GM12878 (cell line): ENCODE measurements at regions of chr6 and their contacts with region 1.

Region 1: GRCh38 chr6:20877008-20877937 is 343.0 kb downstream of the CDKAL1 start:
- DNase-seq: peak; percentile 89
- ATAC-seq: peak; percentile 98
- H3K4me3 ChIP-seq: no peak overlapping the region
- H3K27ac ChIP-seq: peak overlapping the region; percentile 80
- H3K4me1 ChIP-seq: peaks cover 18% of the 10 kb centered on the region; the same call in 1 of the 2 replicates
- H3K27me3 ChIP-seq: no peaks in the 10 kb centered on the region
- CTCF ChIP-seq: no peak
- EP300 ChIP-seq: peak; percentile 76 to 91
- POLR2A ChIP-seq: no peak
- RAD21 ChIP-seq: no peak

Region 2: GRCh38 chr6:20564269-20564668 is 313.0 kb before region 1 on chr6:
- CTCF ChIA-PET with region 1: interaction called, 12 read pairs
- POLR2A ChIA-PET with region 1: no interaction called
- RAD21 ChIA-PET with region 1: interaction called, 16 read pairs
- SMC1A ChIA-PET with region 1: interaction called, 7 read pairs
- in situ Hi-C with region 1: no loop called
- intact Hi-C with region 1: loop called (anchors 5 kb)
- DNase-seq: no peak
- ATAC-seq: peak; percentile 39; the same call in 2 of the 3 replicates
- H3K4me3 ChIP-seq: no peak overlapping the region
- H3K27ac ChIP-seq: peak overlapping the region; percentile 61
- H3K4me1 ChIP-seq: peaks cover 5% of the 10 kb centered on the region
- H3K27me3 ChIP-seq: no peaks in the 10 kb centered on the region
- CTCF ChIP-seq: peak in 2 of 3 experiments; percentile 34 to 44; a peak in 4 of 6 replicates
- EP300 ChIP-seq: no peak
- POLR2A ChIP-seq: no peak
- RAD21 ChIP-seq: peak; percentile 36; the same call in 1 of the 2 replicates

Region 3: DNA sequence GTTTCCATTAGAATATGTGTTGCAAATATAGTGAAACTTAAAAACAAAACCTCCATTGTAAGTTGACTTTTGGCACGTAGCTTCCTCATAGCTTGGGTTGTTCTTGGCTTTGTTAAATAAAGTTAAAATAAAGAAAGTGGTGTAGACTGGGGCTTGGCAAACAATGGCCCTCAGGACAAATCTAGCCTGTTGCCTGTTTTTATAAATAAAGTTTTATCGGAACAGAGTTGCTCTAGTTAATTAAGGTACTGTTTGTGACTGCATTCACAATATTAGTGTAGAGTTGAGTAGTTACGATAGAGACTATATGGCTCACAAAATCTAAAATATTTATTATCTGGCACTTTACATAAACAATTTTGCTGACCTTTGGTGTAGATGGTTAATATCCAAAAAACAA is 174.2 kb before region 1 on chr6:
- CTCF ChIA-PET with region 1: no interaction called
- POLR2A ChIA-PET with region 1: no interaction called
- RAD21 ChIA-PET with region 1: no interaction called
- SMC1A ChIA-PET with region 1: no interaction called
- in situ Hi-C with region 1: no loop called
- intact Hi-C with region 1: no loop called
- DNase-seq: no peak
- ATAC-seq: no peak
- H3K4me3 ChIP-seq: no peak overlapping the region
- H3K27ac ChIP-seq: no peak overlapping the region
- H3K4me1 ChIP-seq: peaks cover 6% of the 10 kb centered on the region
- H3K27me3 ChIP-seq: no peaks in the 10 kb centered on the region
- CTCF ChIP-seq: no peak
- EP300 ChIP-seq: no peak
- POLR2A ChIP-seq: no peak
- RAD21 ChIP-seq: no peak

Region 4: DNA sequence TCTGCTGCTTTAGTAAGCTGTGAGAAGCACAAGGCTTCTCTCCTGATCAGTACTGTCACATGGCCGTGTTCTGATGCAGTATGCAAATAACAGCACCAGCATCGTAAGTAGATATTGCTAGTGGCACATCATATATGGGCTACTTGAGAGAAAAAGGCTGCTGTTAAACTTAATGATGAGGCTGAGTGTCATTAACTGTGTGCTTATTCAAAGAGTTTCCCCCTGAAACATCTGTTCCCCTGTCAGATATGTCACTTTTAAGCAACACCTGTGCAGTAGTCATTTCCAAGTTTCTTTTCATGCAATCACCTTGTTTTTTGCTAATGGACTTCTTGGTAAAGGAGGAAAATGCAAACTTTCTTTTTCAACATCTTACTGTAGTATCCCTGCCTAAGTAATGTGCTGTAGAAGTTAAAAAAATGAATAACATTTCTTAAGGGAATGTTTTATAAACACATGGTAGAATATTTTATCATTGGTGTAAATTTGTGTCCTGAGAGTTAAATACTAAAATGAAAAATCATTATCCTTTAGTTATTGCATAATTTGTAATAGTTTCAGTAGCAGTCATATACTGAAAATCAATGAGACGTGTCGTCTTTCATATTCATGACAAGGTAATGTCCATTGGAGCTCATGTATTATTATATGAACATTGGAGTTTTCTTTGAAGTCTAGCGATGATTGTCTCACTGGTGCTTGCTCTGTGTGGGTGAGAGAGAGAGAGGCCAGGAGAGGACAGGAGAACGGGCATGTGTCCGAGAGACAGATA is 23.3 kb after region 1 on chr6:
- CTCF ChIA-PET with region 1: no interaction called
- POLR2A ChIA-PET with region 1: no interaction called
- RAD21 ChIA-PET with region 1: no interaction called
- SMC1A ChIA-PET with region 1: interaction called, 12 read pairs
- in situ Hi-C with region 1: no loop called
- intact Hi-C with region 1: no loop called
- DNase-seq: no peak
- ATAC-seq: peak; percentile 97
- H3K4me3 ChIP-seq: no peak overlapping the region
- H3K27ac ChIP-seq: peak overlapping the region; percentile 33; the same call in 1 of the 2 replicates
- H3K4me1 ChIP-seq: peaks cover 6% of the 10 kb centered on the region; the same call in 1 of the 2 replicates
- H3K27me3 ChIP-seq: no peaks in the 10 kb centered on the region
- CTCF ChIP-seq: no peak
- EP300 ChIP-seq: peak; percentile 42 to 71; a peak in 3 of 4 replicates
- POLR2A ChIP-seq: no peak
- RAD21 ChIP-seq: no peak

Region 5: DNA sequence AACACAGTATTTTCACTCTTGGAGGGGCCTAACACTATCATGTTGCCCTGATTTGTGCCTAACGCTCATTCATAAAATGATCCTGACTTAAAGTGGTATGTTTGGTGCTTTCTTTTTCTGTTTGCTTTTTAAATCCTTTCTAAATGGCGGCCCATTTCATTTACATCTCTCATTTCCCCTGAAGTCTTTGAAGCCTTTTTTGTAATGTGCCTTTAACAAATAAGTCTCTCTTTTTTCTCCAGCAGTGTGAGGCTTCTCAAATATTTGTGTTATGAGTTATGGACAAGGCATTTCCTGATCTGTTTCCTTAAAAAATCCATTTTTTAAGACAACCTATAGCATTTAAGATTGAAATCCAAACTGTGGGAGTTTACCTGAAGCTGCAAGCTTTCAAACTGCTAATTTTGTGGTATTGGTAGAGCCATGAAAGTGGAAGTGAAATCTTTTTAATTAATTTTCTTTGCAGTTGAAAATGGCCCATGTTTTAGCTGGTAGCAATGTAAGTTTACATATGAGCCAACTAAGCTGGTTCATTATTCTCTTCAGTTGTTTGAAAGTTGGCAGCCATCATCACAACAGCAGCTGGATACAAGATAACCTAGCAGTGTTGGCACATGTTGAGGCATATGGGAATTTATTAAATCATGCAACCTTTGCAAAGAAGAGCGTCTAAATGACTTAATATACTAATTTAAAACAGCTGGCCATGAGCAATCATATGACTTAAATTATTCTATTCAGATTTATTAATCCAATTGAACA is 126.7 kb after region 1 on chr6:
- CTCF ChIA-PET with region 1: interaction called, 4 read pairs
- POLR2A ChIA-PET with region 1: no interaction called
- RAD21 ChIA-PET with region 1: interaction called, 21 read pairs
- SMC1A ChIA-PET with region 1: interaction called, 27 read pairs
- in situ Hi-C with region 1: no loop called
- intact Hi-C with region 1: no loop called
- DNase-seq: peak; percentile 72
- ATAC-seq: peak; percentile 89
- H3K4me3 ChIP-seq: peak overlapping the region; percentile 32; the same call in 1 of the 2 replicates
- H3K27ac ChIP-seq: peak overlapping the region; percentile 83
- H3K4me1 ChIP-seq: peaks cover 20% of the 10 kb centered on the region
- H3K27me3 ChIP-seq: no peaks in the 10 kb centered on the region
- CTCF ChIP-seq: no peak
- EP300 ChIP-seq: peak in 1 of 2 experiments; percentile 72; a peak in 3 of 4 replicates
- POLR2A ChIP-seq: no peak
- RAD21 ChIP-seq: no peak

Region 6: DNA sequence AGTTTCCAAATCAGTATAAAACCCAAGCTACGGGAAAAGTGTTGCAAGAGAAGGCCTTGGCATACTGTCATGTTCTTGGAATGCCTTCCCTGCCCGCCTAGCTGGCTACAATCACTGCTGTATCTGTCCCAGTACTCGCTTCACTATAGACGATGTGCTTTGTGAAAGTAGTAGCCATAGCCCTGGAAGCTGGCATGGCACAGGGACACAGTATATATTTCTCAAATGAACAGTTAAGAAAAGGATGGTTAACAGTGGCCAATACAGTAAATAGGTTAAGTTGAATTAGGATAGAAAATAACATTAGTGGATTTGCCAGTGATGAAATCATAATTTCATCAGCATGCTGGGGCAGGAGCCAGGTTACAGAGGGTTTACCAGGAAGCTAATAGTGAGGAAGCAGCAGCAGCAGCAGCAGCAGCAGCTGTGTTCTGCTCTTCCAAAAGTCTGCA is 156.3 kb after region 1 on chr6:
- CTCF ChIA-PET with region 1: no interaction called
- POLR2A ChIA-PET with region 1: no interaction called
- RAD21 ChIA-PET with region 1: interaction called, 3 read pairs
- SMC1A ChIA-PET with region 1: interaction called, 10 read pairs
- in situ Hi-C with region 1: no loop called
- intact Hi-C with region 1: no loop called
- DNase-seq: no peak
- ATAC-seq: no peak
- H3K4me3 ChIP-seq: no peak overlapping the region
- H3K27ac ChIP-seq: no peak overlapping the region
- H3K4me1 ChIP-seq: peaks cover 4% of the 10 kb centered on the region; the same call in 1 of the 2 replicates
- H3K27me3 ChIP-seq: no peaks in the 10 kb centered on the region
- CTCF ChIP-seq: no peak
- EP300 ChIP-seq: no peak
- POLR2A ChIP-seq: no peak
- RAD21 ChIP-seq: no peak

Region 7: GRCh38 chr6:21188505-21189223 is 311.4 kb after region 1 on chr6:
- CTCF ChIA-PET with region 1: no interaction called
- POLR2A ChIA-PET with region 1: no interaction called
- RAD21 ChIA-PET with region 1: no interaction called
- SMC1A ChIA-PET with region 1: interaction called, 3 read pairs
- in situ Hi-C with region 1: no loop called
- intact Hi-C with region 1: loop called (anchors 10 kb)
- DNase-seq: peak; percentile 82
- ATAC-seq: peak; percentile 77
- H3K4me3 ChIP-seq: no peak overlapping the region
- H3K27ac ChIP-seq: peak overlapping the region; percentile 77
- H3K4me1 ChIP-seq: peaks cover 19% of the 10 kb centered on the region
- H3K27me3 ChIP-seq: no peaks in the 10 kb centered on the region
- CTCF ChIP-seq: no peak
- EP300 ChIP-seq: no peak
- POLR2A ChIP-seq: no peak
- RAD21 ChIP-seq: no peak

Region 8: GRCh38 chr6:21438237-21438985 is 561.1 kb after region 1 on chr6:
- CTCF ChIA-PET with region 1: no interaction called
- POLR2A ChIA-PET with region 1: no interaction called
- RAD21 ChIA-PET with region 1: no interaction called
- SMC1A ChIA-PET with region 1: interaction called, 4 read pairs
- in situ Hi-C with region 1: no loop called
- intact Hi-C with region 1: loop called (anchors 2 kb)
- DNase-seq: peak; percentile 97
- ATAC-seq: peak; percentile 97
- H3K4me3 ChIP-seq: peak overlapping the region; percentile 60; the same call in 1 of the 2 replicates
- H3K27ac ChIP-seq: peak overlapping the region; percentile 89
- H3K4me1 ChIP-seq: peaks cover 17% of the 10 kb centered on the region
- H3K27me3 ChIP-seq: no peaks in the 10 kb centered on the region
- CTCF ChIP-seq: no peak
- EP300 ChIP-seq: peak; percentile 93 to 99
- POLR2A ChIP-seq: no peak
- RAD21 ChIP-seq: no peak